ENCODE measurements at regions of chr3 and their contacts with region 1.

Region 1: DNA sequence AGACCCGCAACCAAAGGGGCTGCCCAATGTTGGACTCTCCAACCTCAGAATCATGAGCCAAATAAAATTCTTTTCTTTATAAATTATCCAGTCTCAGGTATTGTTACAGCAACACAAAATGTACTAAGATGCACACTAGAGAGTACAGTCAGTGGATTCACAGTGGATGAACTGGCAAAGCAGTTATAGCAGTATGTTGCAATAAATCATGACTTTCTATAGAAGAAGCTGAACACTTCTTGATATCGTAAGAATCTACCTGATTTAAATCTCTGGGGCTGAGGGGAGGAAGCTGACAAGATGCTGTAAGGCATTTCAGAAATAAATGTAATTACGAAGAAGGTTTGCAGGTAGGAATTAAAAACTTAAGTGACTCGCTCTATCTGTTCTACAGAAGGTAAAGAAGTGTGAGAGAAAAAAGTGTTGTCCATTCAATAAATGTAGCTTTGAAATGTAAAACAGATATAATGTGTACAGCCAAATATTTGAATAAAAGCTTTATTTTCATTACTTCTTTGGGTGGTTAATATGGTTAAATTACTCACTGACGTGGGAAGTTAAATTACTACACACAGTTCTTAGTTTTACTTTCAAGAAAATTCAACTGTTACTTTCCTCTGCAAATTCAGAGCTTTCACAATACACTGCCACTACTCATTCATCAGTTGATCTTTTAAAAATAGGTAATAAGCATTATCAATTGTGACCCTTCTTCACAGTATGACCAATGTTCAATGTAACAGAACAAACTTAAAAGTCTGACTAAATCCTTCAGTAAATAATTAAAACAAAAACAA is 439.1 kb downstream of the SHQ1 start:
- DNase-seq: no peak
- ATAC-seq: peak; percentile 60
- H3K4me3 Mint-ChIP-seq: no peak overlapping the region
- H3K27ac Mint-ChIP-seq: no peak overlapping the region
- H3K4me1 Mint-ChIP-seq: peaks cover 83% of the 10 kb centered on the region
- H3K27me3 Mint-ChIP-seq: no peaks in the 10 kb centered on the region
- CTCF ChIP-seq: no peak

Region 2: DNA sequence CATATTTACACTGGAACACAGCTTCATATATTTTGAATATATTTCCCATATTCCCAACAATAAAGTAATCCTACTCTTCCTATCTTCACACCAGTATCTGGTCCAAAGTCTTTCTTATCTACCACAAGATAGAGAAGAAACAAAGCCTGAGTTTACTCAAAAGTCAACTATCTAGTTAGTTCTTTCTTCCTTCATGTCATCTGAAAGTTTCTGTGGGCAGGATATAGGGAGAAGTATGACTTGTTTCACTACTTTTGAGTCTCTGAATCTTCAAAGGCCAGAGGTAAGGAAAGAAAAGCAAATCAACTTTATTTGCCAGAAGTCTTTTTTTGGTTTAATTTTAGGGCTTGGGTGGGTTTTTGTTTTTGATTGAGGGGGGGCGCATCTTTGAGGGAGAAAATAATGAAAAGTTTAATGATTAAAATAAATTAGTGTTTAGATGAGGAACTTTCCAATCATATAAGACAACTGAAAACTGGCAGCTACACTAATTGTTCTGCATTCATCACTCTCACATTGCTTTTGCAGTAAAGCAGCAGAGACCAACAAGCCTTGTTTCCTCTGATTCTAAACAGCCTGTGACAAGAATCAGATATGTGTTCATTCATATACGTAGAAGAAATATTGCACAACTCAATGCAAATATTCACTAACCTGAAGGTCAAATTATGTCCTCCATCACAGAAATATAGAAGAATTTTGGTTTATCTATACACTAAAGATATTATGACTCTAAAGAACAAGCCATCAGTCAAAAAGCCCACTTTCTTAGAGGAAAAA is 17.6 kb after region 1 on chr3:
- CTCF ChIA-PET with region 1: interaction called, 6 read pairs
- POLR2A ChIA-PET with region 1: interaction called, 3 read pairs
- intact Hi-C with region 1: loop called (anchors 1 kb)
- DNase-seq: no peak
- ATAC-seq: peak; percentile 81
- H3K4me3 Mint-ChIP-seq: peak overlapping the region; percentile 37
- H3K27ac Mint-ChIP-seq: peak overlapping the region; percentile 81
- H3K4me1 Mint-ChIP-seq: peaks cover 74% of the 10 kb centered on the region
- H3K27me3 Mint-ChIP-seq: no peaks in the 10 kb centered on the region
- CTCF ChIP-seq: no peak

Region 3: GRCh38 chr3:72549761-72550581 is 140.8 kb after region 1 on chr3:
- CTCF ChIA-PET with region 1: no interaction called
- POLR2A ChIA-PET with region 1: no interaction called
- intact Hi-C with region 1: no loop called
- DNase-seq: peak; percentile 20
- ATAC-seq: peak; percentile 60
- H3K4me3 Mint-ChIP-seq: peak overlapping the region; percentile 50
- H3K27ac Mint-ChIP-seq: peak overlapping the region; percentile 77
- H3K4me1 Mint-ChIP-seq: peaks cover 17% of the 10 kb centered on the region
- H3K27me3 Mint-ChIP-seq: no peaks in the 10 kb centered on the region
- CTCF ChIP-seq: no peak